GM12878 (cell line): ENCODE measurements at regions of chr5 and their contacts with region 1.

Region 1: DNA sequence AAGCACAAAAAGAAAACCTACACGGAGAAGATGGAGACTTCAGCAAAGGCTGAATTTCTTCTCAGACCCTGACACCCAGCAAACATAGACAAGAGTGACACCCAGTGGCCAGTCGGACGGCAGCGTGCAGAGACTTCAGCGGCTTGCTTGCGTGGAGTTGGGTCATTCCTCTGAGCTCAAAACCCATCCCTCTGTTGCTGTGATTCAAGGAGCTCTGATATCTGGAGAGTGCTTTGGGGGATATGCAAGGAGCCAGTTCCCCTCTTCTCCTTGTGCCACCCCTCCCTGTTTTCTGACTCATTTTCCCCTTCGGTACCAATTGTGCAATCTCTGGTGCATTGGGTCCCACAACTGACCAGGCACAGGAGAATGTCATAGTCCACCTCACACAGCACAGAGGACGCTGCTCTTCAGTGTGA is 27.5 kb downstream of the SH3TC2 start:
- DNase-seq: no peak
- ATAC-seq: peak; percentile 98
- H3K4me3 ChIP-seq: no peak overlapping the region
- H3K27ac ChIP-seq: no peak overlapping the region
- H3K4me1 ChIP-seq: no peaks in the 10 kb centered on the region
- H3K27me3 ChIP-seq: no peaks in the 10 kb centered on the region
- CTCF ChIP-seq: peak; percentile 82 to 91 (median 88)
- EP300 ChIP-seq: no peak
- POLR2A ChIP-seq: no peak
- RAD21 ChIP-seq: peak; percentile 87

Region 2: DNA sequence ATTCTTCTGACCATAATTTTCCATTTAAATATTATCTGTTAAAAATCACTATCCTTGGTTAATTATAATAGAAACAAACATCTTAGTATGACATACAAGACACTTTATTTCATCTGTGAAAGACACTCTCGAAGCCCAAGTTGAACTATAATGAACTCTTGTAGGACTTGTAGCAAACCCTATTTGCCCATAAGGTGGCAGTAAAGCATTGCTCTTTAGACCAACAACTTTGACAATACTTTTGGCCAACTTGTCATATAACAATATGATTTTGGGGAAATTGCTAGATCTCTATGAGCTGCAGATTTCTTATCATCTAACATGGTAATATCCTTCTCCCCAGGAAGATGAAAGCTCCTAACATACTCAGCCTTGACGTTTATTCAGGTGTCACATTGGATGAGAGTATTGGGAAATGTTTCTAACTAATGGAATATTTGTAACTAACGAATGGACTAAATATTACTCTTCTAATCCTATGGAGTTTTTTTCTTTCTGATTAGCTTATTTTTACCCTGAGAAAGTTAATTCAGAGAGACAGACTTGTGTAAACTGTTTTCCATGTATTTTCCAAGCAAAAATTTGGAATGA is 856.1 kb before region 1 on chr5:
- CTCF ChIA-PET with region 1: no interaction called
- POLR2A ChIA-PET with region 1: no interaction called
- RAD21 ChIA-PET with region 1: no interaction called
- SMC1A ChIA-PET with region 1: no interaction called
- in situ Hi-C with region 1: loop called (anchors 25 kb)
- intact Hi-C with region 1: loop called (anchors 10 kb)
- DNase-seq: peak; percentile 4
- ATAC-seq: peak; percentile 77
- H3K4me3 ChIP-seq: no peak overlapping the region
- H3K27ac ChIP-seq: no peak overlapping the region
- H3K4me1 ChIP-seq: no peaks in the 10 kb centered on the region
- H3K27me3 ChIP-seq: no peaks in the 10 kb centered on the region
- CTCF ChIP-seq: peak; percentile 57 to 75 (median 61); a peak in 5 of 6 replicates
- EP300 ChIP-seq: no peak
- POLR2A ChIP-seq: no peak
- RAD21 ChIP-seq: peak; percentile 87

Region 3: GRCh38 chr5:148443998-148444397 is 591.4 kb before region 1 on chr5:
- CTCF ChIA-PET with region 1: interaction called, 6 read pairs
- POLR2A ChIA-PET with region 1: no interaction called
- RAD21 ChIA-PET with region 1: interaction called, 3 read pairs
- SMC1A ChIA-PET with region 1: interaction called, 3 read pairs
- in situ Hi-C with region 1: loop called (anchors 10 kb)
- intact Hi-C with region 1: loop called (anchors 5 kb)
- DNase-seq: peak; percentile 3
- ATAC-seq: peak; percentile 96
- H3K4me3 ChIP-seq: no peak overlapping the region
- H3K27ac ChIP-seq: no peak overlapping the region
- H3K4me1 ChIP-seq: no peaks in the 10 kb centered on the region
- H3K27me3 ChIP-seq: no peaks in the 10 kb centered on the region
- CTCF ChIP-seq: peak; percentile 63 to 73 (median 69)
- EP300 ChIP-seq: no peak
- POLR2A ChIP-seq: no peak
- RAD21 ChIP-seq: peak; percentile 78

Region 4: DNA sequence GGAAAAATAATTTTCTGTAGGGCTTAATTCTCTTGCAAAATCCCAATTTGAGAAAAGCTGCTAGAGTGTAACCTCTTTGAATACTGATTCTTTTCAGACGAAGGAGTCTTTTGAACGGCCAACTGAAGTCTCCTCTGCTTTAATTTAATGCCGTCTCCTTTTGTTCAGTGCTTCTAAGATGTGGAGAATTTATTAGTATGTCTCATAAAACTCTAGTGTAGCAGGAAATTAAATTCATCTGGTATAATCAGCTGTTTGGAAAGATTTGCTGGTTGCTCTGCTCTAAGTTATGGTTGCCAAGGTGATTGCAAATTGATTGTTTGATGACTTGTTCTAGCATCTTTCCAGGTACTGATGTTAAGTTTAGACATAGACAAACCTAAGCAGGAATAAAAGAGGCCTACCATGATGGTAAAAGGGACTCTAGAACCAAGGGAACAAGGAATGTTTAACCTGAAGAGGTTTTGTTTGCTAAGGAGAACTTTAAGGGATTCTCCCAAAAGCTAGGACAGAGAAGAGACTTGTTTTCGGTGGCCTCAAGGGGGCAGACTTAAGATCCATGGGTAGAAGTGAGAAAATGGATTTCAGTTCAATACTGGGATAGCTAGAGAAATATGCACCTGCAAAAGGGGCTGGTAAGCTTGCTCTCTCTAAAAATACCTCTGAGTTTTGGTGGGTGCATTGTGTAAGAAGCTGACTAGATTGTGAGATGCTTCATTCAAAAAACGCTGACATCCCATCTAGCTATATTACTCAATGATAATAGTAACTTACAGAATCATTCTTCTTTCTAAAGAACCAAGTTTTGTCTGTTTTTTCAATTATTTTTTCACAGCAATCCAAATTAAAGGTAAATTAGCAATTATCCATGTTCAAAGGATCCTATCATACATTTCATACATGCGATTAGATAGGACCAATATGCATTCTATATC is 214.7 kb before region 1 on chr5:
- CTCF ChIA-PET with region 1: no interaction called
- POLR2A ChIA-PET with region 1: no interaction called
- RAD21 ChIA-PET with region 1: interaction called, 6 read pairs
- SMC1A ChIA-PET with region 1: no interaction called
- in situ Hi-C with region 1: no loop called
- intact Hi-C with region 1: loop called (anchors 5 kb)
- DNase-seq: no peak
- ATAC-seq: peak; percentile 76
- H3K4me3 ChIP-seq: no peak overlapping the region
- H3K27ac ChIP-seq: no peak overlapping the region
- H3K4me1 ChIP-seq: peaks cover 5% of the 10 kb centered on the region
- H3K27me3 ChIP-seq: no peaks in the 10 kb centered on the region
- CTCF ChIP-seq: peak; percentile 49 to 59 (median 59); a peak in 5 of 6 replicates
- EP300 ChIP-seq: no peak
- POLR2A ChIP-seq: no peak
- RAD21 ChIP-seq: peak; percentile 41

Region 5: GRCh38 chr5:148998174-148998797 is 37.1 kb before region 1 on chr5:
- CTCF ChIA-PET with region 1: interaction called, 11 read pairs
- POLR2A ChIA-PET with region 1: no interaction called
- RAD21 ChIA-PET with region 1: no interaction called
- SMC1A ChIA-PET with region 1: interaction called, 3 read pairs
- in situ Hi-C with region 1: no loop called
- intact Hi-C with region 1: no loop called
- DNase-seq: no peak
- ATAC-seq: peak; percentile 86
- H3K4me3 ChIP-seq: no peak overlapping the region
- H3K27ac ChIP-seq: no peak overlapping the region
- H3K4me1 ChIP-seq: no peaks in the 10 kb centered on the region
- H3K27me3 ChIP-seq: no peaks in the 10 kb centered on the region
- CTCF ChIP-seq: peak; percentile 49 to 56 (median 52); a peak in 5 of 6 replicates
- EP300 ChIP-seq: no peak
- POLR2A ChIP-seq: no peak
- RAD21 ChIP-seq: peak; percentile 56

Region 6: GRCh38 chr5:149268928-149269557 is 233.7 kb after region 1 on chr5:
- CTCF ChIA-PET with region 1: interaction called, 3 read pairs
- POLR2A ChIA-PET with region 1: no interaction called
- RAD21 ChIA-PET with region 1: no interaction called
- SMC1A ChIA-PET with region 1: no interaction called
- in situ Hi-C with region 1: no loop called
- intact Hi-C with region 1: loop called (anchors 2 kb)
- DNase-seq: no peak
- ATAC-seq: peak; percentile 83
- H3K4me3 ChIP-seq: no peak overlapping the region
- H3K27ac ChIP-seq: no peak overlapping the region
- H3K4me1 ChIP-seq: no peaks in the 10 kb centered on the region
- H3K27me3 ChIP-seq: peaks cover 9 to 12% of the 10 kb centered on the region in 2 experiments
- CTCF ChIP-seq: peak; percentile 54 to 56 (median 55)
- EP300 ChIP-seq: no peak
- POLR2A ChIP-seq: no peak
- RAD21 ChIP-seq: peak; percentile 55

Region 7: GRCh38 chr5:149434162-149435014 is 399.0 kb after region 1 on chr5:
- CTCF ChIA-PET with region 1: no interaction called
- POLR2A ChIA-PET with region 1: no interaction called
- RAD21 ChIA-PET with region 1: no interaction called
- SMC1A ChIA-PET with region 1: no interaction called
- in situ Hi-C with region 1: no loop called
- intact Hi-C with region 1: no loop called
- DNase-seq: no peak
- ATAC-seq: peak; percentile 75
- H3K4me3 ChIP-seq: no peak overlapping the region
- H3K27ac ChIP-seq: no peak overlapping the region
- H3K4me1 ChIP-seq: no peaks in the 10 kb centered on the region
- H3K27me3 ChIP-seq: peaks cover 0 to 5% of the 10 kb centered on the region in 2 experiments; a peak in 3 of 4 replicates
- CTCF ChIP-seq: peak; percentile 71 to 84 (median 75)
- EP300 ChIP-seq: no peak
- POLR2A ChIP-seq: no peak
- RAD21 ChIP-seq: peak; percentile 52